ENCODE measurements at regions of chr14 and their contacts with region 1.

Region 1: GRCh38 chr14:43894534-43894933 is 612.5 kb downstream of the FSCB start:
- DNase-seq: no peak
- H3K4me3 Mint-ChIP-seq: no peak overlapping the region
- H3K27ac Mint-ChIP-seq: no peak overlapping the region
- H3K4me1 Mint-ChIP-seq: no peaks in the 10 kb centered on the region
- H3K27me3 Mint-ChIP-seq: no peaks in the 10 kb centered on the region

Region 2: DNA sequence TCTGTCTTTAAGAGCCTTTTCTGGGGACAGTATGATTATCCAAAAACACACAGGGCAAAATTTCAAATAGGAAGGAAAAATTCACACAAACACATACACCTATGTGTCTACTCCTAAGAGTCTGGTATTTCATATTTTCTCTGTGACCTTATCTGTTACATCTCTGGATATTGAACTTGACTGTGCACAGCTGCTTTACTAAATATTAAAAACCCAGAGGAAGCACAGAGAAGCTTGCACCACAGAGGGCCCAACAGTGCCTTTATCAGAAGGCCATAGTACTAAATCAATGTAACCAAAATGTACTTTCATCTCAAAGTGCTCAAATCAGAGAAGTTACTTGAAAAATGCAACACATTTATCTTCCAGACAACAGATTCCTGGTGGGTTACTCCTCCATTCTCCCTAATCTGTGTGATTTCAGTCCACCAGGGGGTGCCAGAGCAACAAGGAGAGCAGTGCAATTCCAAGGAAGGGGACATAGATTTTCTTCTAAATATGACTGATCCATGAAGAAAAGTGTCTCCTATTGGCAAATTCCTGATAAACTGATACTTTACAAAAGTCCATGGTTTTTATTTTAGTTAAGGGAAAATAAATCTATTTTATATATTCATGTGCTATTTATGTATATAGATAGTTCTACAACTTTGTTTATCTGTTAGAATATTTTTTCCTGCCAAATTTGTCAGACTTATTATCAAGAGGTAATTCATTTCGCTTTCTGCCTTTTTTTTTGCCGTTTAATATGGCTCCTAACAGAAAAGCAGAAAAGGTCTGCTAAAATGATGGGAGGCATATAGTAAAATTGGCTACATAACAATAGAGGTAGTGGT is 1670.3 kb before region 1 on chr14:
- CTCF ChIA-PET with region 1: no interaction called
- intact Hi-C with region 1: loop called (anchors 5 kb)
- DNase-seq: peak; percentile 47
- H3K4me3 Mint-ChIP-seq: no peak overlapping the region
- H3K27ac Mint-ChIP-seq: no peak overlapping the region
- H3K4me1 Mint-ChIP-seq: no peaks in the 10 kb centered on the region
- H3K27me3 Mint-ChIP-seq: no peaks in the 10 kb centered on the region

Region 3: GRCh38 chr14:43949400-43949799 is 54.9 kb after region 1 on chr14:
- CTCF ChIA-PET with region 1: no interaction called
- intact Hi-C with region 1: no loop called
- DNase-seq: no peak
- H3K4me3 Mint-ChIP-seq: no peak overlapping the region
- H3K27ac Mint-ChIP-seq: no peak overlapping the region
- H3K4me1 Mint-ChIP-seq: no peaks in the 10 kb centered on the region
- H3K27me3 Mint-ChIP-seq: no peaks in the 10 kb centered on the region